Thyroid gland (tissue), 4 donors: ENCODE measurements at regions of chr1 and their contacts with region 1.

Region 1: DNA sequence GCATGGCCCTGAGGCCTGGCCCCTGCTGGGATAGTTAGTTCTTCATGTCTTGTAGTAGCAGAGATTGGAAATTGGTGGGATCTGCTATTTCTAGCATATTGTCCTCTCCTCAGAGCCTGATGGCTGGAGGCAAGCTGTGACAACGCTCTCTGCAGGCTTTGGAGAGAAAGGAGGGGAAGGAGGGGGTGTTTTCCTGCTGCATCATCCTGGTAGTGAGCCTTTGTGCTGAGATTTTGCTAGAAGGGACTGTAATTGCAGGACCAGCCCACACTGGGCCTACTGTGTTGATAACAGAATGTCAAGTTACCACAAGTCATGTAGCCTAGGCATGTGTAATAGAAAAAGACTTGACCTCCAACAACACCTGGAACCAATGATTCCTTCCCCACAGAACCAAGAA is 351.0 kb downstream of the SIPA1L2 start:
- DNase-seq: no peak
- H3K4me3 ChIP-seq: no peak overlapping the region
- H3K27ac ChIP-seq: no peak overlapping the region
- H3K4me1 ChIP-seq: no peaks in the 10 kb centered on the region
- H3K27me3 ChIP-seq: no peaks in the 10 kb centered on the region
- CTCF ChIP-seq: no peak
- POLR2A ChIP-seq: no peak

Region 2: GRCh38 chr1:232244426-232244825 is 34.5 kb before region 1 on chr1:
- intact Hi-C with region 1: no loop called
- DNase-seq: no peak
- H3K4me3 ChIP-seq: no peak overlapping the region
- H3K27ac ChIP-seq: no peak overlapping the region
- H3K4me1 ChIP-seq: no peaks in the 10 kb centered on the region
- H3K27me3 ChIP-seq: no peaks in the 10 kb centered on the region
- CTCF ChIP-seq: no peak
- POLR2A ChIP-seq: no peak

Region 3: GRCh38 chr1:233919786-233920185 is 1640.9 kb after region 1 on chr1:
- intact Hi-C with region 1: loop called (anchors 5 kb)
- DNase-seq: no peak
- H3K4me3 ChIP-seq: no peak overlapping the region
- H3K27ac ChIP-seq: no peak overlapping the region
- H3K4me1 ChIP-seq: no peaks in the 10 kb centered on the region
- H3K27me3 ChIP-seq: no peaks in the 10 kb centered on the region
- CTCF ChIP-seq: no peak
- POLR2A ChIP-seq: no peak